Breast epithelium (tissue), 4 donors: ENCODE measurements at regions of chr9 and their contacts with region 1.

Region 1: DNA sequence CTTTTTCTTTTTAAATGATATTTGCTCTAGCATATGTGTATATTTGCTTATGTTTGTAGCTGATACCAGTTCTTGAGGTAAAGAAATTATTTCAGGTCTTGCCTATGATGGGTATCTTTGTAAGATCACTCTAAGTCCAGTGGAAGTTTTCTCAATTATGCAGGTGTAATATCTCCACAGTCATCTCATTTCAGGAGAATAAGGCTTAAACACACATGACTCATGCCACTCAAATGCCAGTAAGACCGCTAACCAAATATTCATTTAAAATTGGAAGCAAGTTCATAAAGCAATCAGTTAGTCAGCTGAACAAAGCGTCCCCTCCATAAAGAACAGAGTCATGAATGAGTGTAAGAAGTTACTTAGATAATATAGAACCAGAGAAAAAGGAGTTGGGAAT is 248.6 kb downstream of the LURAP1L start:
- DNase-seq: no peak
- H3K4me3 ChIP-seq: no peak overlapping the region
- H3K27ac ChIP-seq: no peak overlapping the region
- H3K4me1 ChIP-seq: no peaks in the 10 kb centered on the region
- H3K27me3 ChIP-seq: no peaks in the 10 kb centered on the region
- CTCF ChIP-seq: no peak
- POLR2A ChIP-seq: no peak

Region 2: DNA sequence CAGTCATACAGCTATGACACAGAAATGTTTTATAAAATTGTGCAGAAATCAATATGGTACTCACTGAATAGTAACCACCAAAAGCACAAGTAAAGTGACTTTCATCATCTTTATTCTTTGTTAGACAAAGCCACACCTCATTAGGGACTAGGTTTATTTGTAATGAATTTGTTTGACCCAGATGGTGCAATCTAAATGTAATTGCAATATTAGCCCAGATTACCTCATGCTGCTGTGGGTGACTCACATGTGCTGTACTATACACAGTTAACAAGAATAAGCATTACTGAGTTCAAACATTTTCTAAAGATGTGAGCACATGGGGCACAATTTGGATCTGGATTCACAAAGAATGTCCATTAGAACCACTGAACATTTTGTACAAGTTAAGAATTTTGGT is 1089.5 kb before region 1 on chr9:
- intact Hi-C with region 1: loop called (anchors 10 kb)
- DNase-seq: no peak
- H3K4me3 ChIP-seq: no peak overlapping the region
- H3K27ac ChIP-seq: no peak overlapping the region
- H3K4me1 ChIP-seq: no peaks in the 10 kb centered on the region
- H3K27me3 ChIP-seq: no peaks in the 10 kb centered on the region
- CTCF ChIP-seq: no peak
- POLR2A ChIP-seq: no peak